T-cell (primary cell): ENCODE measurements at regions of chr20 and their contacts with region 1.

Region 1: DNA sequence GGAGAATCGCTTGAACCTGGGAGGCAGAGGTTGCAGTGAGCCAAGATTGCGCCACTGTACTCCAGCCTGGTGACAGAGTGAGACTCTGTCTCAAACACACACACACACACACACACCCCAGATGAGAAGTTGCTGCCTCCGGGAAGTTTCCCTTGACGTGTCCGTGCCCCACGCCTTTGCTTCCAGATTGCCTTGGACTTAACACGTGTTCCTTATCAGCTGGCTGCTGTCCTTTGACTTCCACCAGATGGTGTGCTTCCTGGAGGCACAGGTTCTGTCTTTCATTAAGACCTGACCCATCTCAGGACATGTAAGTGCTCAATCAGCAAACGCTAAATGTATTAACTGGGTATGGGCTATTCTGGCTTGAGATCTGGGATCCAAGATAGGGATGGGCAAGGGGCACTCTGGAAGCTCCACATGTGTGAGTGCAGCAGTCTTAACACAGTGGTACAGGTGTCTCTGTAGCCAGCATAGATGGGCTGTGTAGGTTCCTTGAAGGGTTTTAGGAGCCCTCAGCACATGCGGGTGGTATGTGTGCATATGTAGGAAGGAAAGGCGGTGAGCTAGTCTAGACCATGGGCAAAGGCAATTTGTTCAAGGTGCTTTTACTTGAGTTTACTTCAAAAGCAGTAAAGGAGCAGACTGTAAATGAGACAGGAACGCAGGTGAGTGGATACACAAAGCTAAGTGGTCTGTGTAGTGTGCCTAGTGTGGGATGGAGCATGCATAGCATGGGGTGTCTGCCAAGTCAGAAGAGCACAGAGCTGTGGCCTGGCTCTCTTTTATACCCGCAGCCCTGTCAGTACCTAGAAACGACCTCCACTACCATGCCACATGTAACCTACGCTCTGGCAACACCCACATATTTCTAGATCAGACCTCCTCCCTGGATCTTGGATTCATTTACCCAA is 11.6 kb downstream of the PIGT start:
- DNase-seq: no peak
- ATAC-seq: no peak
- H3K4me3 ChIP-seq: no peak overlapping the region
- H3K4me3 Mint-ChIP-seq: no peak overlapping the region
- H3K27ac ChIP-seq: no peak overlapping the region
- H3K27ac Mint-ChIP-seq: peak overlapping the region in 1 of 2 donors; percentile 8
- H3K4me1 ChIP-seq: peaks cover 0 to 6% of the 10 kb centered on the region in 2 experiments
- H3K4me1 Mint-ChIP-seq: peaks cover 0 to 6% (median 2%) of the 10 kb centered on the region in 3 donors
- H3K27me3 ChIP-seq: no peaks in the 10 kb centered on the region
- H3K27me3 Mint-ChIP-seq: no peaks in the 10 kb centered on the region

Region 2: DNA sequence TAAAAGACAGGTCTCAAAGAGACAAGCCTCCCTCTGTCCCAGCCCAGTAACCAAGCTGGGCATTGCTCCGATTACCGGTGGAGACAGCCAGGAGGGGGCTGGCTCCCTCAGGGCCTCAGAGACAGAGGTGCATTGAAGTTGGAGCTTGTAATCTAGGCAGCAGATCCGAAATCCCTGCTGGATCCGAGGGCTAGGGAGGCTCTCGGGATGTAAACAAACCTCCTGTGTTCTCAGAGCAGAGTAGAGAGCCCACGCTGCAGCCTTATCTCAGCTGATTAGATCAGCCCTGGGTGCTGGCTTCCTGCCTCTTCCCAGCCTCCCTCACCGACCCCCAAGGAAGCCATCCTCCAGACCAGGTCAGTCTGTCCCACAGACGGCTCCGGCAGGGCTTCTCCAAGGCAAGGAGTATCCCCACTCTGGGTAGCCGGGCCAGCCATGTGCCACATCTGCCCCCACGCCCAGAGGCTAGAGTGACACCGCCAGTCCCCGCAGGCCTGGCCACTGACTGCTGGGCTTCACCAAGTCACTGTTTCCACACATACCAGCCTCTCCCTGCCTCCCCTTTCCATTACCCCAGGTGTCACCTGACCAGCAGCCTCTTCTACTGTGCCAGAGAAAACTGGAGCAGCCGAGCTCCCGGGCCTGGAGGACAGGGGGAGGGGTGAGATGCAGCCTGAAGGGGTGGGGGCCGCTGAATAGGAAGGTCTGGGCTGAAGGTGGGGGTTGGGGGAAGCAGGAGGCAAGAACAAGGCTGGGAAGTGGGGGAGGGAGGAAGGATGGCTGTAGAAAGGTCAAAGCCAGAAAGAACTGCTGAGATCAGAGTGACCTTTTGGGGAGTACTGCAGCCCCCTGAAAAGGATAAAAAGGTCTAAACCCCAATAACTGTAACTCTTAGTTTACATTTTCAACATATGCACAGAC is 85.3 kb before region 1 on chr20:
- CTCF ChIA-PET with region 1: no interaction called
- POLR2A ChIA-PET with region 1: interaction called in 1 of 2 experiments, 12 read pairs
- DNase-seq: no peak
- ATAC-seq: no peak
- H3K4me3 ChIP-seq: no peak overlapping the region
- H3K4me3 Mint-ChIP-seq: no peak overlapping the region
- H3K27ac ChIP-seq: no peak overlapping the region
- H3K27ac Mint-ChIP-seq: no peak overlapping the region
- H3K4me1 ChIP-seq: peaks cover 0 to 1% of the 10 kb centered on the region in 2 experiments
- H3K4me1 Mint-ChIP-seq: peaks cover 7 to 22% (median 11%) of the 10 kb centered on the region in 3 donors
- H3K27me3 ChIP-seq: peaks cover 0 to 10% of the 10 kb centered on the region in 2 experiments
- H3K27me3 Mint-ChIP-seq: peaks cover 3 to 12% of the 10 kb centered on the region in 2 donors

Region 3: GRCh38 chr20:45409521-45410272 is 17.8 kb before region 1 on chr20:
- CTCF ChIA-PET with region 1: no interaction called
- POLR2A ChIA-PET with region 1: no interaction called
- DNase-seq: no peak
- ATAC-seq: no peak
- H3K4me3 ChIP-seq: no peak overlapping the region
- H3K4me3 Mint-ChIP-seq: no peak overlapping the region
- H3K27ac ChIP-seq: no peak overlapping the region
- H3K27ac Mint-ChIP-seq: no peak overlapping the region
- H3K4me1 ChIP-seq: peaks cover 10 to 27% of the 10 kb centered on the region in 2 experiments
- H3K4me1 Mint-ChIP-seq: peaks cover 21 to 24% (median 23%) of the 10 kb centered on the region in 3 donors
- H3K27me3 ChIP-seq: no peaks in the 10 kb centered on the region
- H3K27me3 Mint-ChIP-seq: peaks cover 0 to 2% of the 10 kb centered on the region in 2 donors